ENCODE measurements at regions of chr14 and their contacts with region 1.

Region 1: DNA sequence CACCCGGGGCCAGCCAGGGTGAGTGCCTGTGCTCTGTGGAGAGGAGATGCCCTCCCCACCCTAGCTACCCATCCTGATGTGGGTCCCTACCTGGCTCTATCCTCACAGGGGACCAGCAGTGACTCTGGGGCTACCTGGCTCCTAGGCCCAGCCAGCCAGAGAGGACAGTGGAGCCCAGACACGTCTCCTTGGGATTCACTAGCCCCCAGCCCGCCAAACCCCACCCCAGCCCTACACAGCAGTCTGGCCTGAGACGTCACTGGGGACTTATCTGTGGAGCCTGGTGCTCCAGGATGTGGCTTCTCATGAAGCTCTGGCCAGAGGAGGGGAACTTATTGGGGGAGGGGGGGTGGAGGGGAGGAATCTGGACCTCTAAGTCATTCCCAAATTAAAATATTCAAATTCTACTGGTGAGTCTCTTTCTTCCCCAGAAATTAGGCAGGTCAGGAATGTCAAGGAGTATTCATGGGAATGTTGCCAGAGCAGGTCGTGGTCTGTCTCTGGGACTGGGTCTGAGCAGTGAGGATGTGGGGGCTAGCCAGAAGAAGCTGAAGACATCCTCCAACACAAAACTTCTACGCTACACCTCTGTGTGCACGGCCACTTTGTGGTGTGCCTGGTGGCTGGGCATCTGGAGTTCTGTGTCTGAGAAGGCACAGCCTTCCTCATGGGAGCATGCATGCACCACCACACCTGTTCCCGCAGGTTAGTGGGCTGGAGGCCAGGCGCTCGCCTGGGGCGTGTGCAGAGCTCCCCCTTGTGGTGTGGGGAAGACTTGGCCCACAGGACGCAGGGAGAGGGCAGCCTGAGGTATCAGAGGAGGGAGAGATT is 2.7 kb downstream of the CMTM5 start:
- DNase-seq: peak; percentile 73
- H3K4me3 Mint-ChIP-seq: no peak overlapping the region
- H3K27ac Mint-ChIP-seq: no peak overlapping the region
- H3K4me1 Mint-ChIP-seq: no peaks in the 10 kb centered on the region
- H3K27me3 Mint-ChIP-seq: peaks cover 7% of the 10 kb centered on the region

Region 2: GRCh38 chr14:23020143-23021128 is 359.1 kb before region 1 on chr14:
- CTCF ChIA-PET with region 1: no interaction called
- POLR2A ChIA-PET with region 1: no interaction called
- intact Hi-C with region 1: no loop called
- DNase-seq: no peak
- H3K4me3 Mint-ChIP-seq: no peak overlapping the region
- H3K27ac Mint-ChIP-seq: no peak overlapping the region
- H3K4me1 Mint-ChIP-seq: peaks cover 23% of the 10 kb centered on the region
- H3K27me3 Mint-ChIP-seq: no peaks in the 10 kb centered on the region

Region 3: DNA sequence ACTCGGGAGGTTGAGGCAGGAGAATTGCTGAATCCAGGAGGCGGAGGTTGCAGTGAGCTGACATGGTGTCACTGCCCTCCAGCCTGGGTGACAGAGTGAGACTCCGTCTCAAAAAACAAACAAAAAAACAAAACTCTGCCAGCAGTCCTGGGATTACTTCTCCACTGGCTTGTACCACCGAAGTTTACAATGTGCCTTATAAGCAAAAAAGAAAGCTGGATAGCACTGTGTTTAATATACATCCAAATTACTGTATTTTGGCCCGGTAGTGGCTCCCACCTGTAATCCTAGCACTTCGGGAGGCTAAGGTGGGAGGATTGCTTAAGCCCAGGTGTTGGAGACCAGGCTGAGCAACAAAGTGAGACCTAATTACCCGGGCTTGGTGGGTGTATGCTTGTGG is 110.4 kb before region 1 on chr14:
- CTCF ChIA-PET with region 1: interaction called, 8 read pairs
- POLR2A ChIA-PET with region 1: no interaction called
- intact Hi-C with region 1: loop called (anchors 1 kb)
- DNase-seq: no peak
- H3K4me3 Mint-ChIP-seq: no peak overlapping the region
- H3K27ac Mint-ChIP-seq: no peak overlapping the region
- H3K4me1 Mint-ChIP-seq: no peaks in the 10 kb centered on the region
- H3K27me3 Mint-ChIP-seq: peaks cover 4% of the 10 kb centered on the region

Region 4: GRCh38 chr14:23320774-23321571 is 58.6 kb before region 1 on chr14 and contains the start of gene PABPN1:
- CTCF ChIA-PET with region 1: interaction called, 108 read pairs
- POLR2A ChIA-PET with region 1: interaction called, 5 read pairs
- intact Hi-C with region 1: no loop called
- DNase-seq: peak; percentile 99
- H3K4me3 Mint-ChIP-seq: peak within 1 kb of the TSS; percentile 92
- H3K27ac Mint-ChIP-seq: peak within 1 kb of the TSS; percentile 90
- H3K4me1 Mint-ChIP-seq: peaks cover 23% of the 10 kb centered on the region
- H3K27me3 Mint-ChIP-seq: no peaks in the 10 kb centered on the region
- total RNA-seq, gene PABPN1: 198 to 209 TPM

Region 5: GRCh38 chr14:23335623-23336022 is 44.0 kb before region 1 on chr14:
- CTCF ChIA-PET with region 1: interaction called, 108 read pairs
- POLR2A ChIA-PET with region 1: no interaction called
- intact Hi-C with region 1: no loop called
- DNase-seq: no peak
- H3K4me3 Mint-ChIP-seq: no peak overlapping the region
- H3K27ac Mint-ChIP-seq: no peak overlapping the region
- H3K4me1 Mint-ChIP-seq: no peaks in the 10 kb centered on the region
- H3K27me3 Mint-ChIP-seq: peaks cover 12% of the 10 kb centered on the region

Region 6: DNA sequence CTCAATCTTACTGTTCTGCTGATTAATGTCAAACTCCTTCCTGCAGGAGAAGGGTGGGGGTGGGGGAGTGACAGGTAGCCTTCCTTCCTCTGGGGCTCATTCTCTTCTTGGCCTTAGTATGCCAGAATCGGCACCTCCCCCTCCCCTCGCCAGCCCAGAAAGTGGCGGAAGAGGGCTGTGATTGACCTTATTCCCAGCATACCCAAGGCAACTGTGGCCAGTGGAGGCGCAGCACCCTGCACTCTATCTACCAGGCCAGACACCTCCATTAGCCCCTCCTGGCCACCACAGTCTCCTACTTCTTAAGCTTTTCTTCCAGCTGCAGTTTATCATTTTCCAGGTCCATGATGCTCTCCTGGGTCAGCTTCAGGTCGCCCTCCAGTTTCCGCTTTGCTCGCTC is 13.0 kb after region 1 on chr14:
- CTCF ChIA-PET with region 1: interaction called, 11 read pairs
- POLR2A ChIA-PET with region 1: no interaction called
- intact Hi-C with region 1: no loop called
- DNase-seq: no peak
- H3K4me3 Mint-ChIP-seq: no peak overlapping the region
- H3K27ac Mint-ChIP-seq: no peak overlapping the region
- H3K4me1 Mint-ChIP-seq: no peaks in the 10 kb centered on the region
- H3K27me3 Mint-ChIP-seq: peaks cover 2% of the 10 kb centered on the region

Region 7: DNA sequence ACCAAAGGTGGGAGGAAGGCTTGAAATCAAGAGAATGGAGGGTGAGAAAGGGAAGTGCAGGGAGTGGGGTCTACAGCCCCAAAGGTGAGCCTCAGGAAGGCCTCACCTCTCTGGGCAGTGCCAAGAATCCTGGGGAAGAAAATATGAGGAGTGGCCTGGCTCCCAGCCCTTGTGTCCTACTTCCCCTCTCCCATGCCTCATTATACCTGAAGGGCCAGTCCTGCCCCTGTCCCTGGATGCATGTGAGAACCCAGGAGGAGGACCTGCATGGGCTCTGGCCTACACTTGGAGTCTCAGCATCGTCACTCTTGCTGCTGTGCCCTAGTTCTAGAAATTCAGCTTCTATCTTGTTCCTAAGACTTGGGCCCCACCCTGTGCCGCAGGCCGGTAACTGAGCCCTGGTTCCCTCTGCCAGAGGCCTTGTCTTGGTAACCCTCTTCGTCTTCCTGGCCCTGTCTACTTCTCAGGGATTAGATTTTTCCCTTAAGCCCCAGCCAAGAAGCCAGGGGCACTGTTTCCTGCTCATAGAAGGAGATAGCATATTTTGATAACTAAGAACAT is 66.8 kb after region 1 on chr14:
- CTCF ChIA-PET with region 1: no interaction called
- POLR2A ChIA-PET with region 1: no interaction called
- intact Hi-C with region 1: no loop called
- DNase-seq: no peak
- H3K4me3 Mint-ChIP-seq: no peak overlapping the region
- H3K27ac Mint-ChIP-seq: no peak overlapping the region
- H3K4me1 Mint-ChIP-seq: no peaks in the 10 kb centered on the region
- H3K27me3 Mint-ChIP-seq: peaks cover 13% of the 10 kb centered on the region

Measured in activated CD4-positive, alpha-beta memory T cell treated with anti-CD3 and anti-CD28 coated beads for 36 hours (primary cell).